Activated CD4-positive, alpha-beta T cell treated with anti-CD3 and anti-CD28 coated beads for 36 hours (primary cell): ENCODE measurements at regions of chr17 and their contacts with region 1.

Region 1: DNA sequence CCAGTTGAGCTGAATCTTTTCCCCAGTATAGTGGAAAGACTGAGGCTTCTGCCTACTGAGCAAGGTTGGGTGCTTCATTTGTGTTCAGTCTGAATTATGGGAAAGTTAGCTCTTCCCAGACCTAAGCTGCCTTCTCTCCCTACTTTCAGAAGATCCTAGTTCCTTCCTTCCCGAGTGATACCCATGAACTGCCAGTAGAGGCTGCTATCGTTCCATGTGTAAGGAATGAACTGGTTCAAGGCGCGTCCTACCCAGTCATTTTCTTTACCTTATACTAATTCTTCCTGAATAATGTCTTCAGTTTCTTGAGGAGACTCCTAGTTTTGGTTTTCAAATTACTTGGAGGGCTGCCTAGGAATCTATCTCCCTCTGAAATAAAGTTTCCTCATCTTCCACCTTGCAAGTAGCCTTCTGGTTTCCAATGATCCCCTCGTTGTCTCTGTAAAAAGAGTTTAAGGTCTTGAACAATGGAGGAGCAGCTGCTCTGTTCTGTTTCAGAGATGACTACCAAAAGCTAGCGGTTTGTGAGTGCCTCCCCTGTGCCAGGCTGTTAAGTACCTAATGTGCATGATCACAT is 934 bp upstream of the AOC2 start:
- DNase-seq: peak; percentile 37
- ATAC-seq: no peak
- H3K4me3 Mint-ChIP-seq: no peak overlapping the region
- H3K27ac Mint-ChIP-seq: no peak overlapping the region
- H3K4me1 Mint-ChIP-seq: peaks cover 19% of the 10 kb centered on the region
- H3K27me3 Mint-ChIP-seq: no peaks in the 10 kb centered on the region

Region 2: DNA sequence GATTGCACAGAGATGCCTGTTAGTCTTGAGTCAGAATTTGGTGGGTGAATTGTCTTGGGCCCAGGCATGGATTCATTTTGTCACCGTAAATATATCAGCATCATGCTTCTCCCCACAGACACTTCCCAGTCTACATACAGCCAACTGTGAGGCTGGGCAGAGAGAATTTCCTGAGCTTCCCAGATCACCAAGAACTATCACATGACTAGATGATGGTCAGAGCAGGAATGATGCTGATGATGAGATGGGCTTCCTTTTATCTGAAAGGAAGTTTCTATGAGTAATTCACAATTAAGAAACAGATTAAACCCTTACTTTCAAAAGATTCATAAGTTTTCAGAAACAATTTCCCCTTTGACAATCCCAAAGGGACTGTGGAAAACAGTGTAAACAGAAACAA is 1588.6 kb before region 1 on chr17:
- CTCF ChIA-PET with region 1: no interaction called
- POLR2A ChIA-PET with region 1: no interaction called
- intact Hi-C with region 1: no loop called
- DNase-seq: no peak
- ATAC-seq: no peak
- H3K4me3 Mint-ChIP-seq: no peak overlapping the region
- H3K27ac Mint-ChIP-seq: no peak overlapping the region
- H3K4me1 Mint-ChIP-seq: no peaks in the 10 kb centered on the region
- H3K27me3 Mint-ChIP-seq: peaks cover 4% of the 10 kb centered on the region

Region 3: GRCh38 chr17:42832974-42833766 is 10.3 kb before region 1 on chr17 and contains the start of gene PSME3:
- CTCF ChIA-PET with region 1: interaction called, 10 read pairs
- POLR2A ChIA-PET with region 1: interaction called, 13 read pairs
- intact Hi-C with region 1: loop called in 1 of 2 experiments (anchors 1 kb)
- DNase-seq: peak; percentile 94
- ATAC-seq: peak; percentile 90
- H3K4me3 Mint-ChIP-seq: peak within 1 kb of the TSS; percentile 96
- H3K27ac Mint-ChIP-seq: peak within 1 kb of the TSS; percentile 98
- H3K4me1 Mint-ChIP-seq: peaks cover 18% of the 10 kb centered on the region
- H3K27me3 Mint-ChIP-seq: no peaks in the 10 kb centered on the region
- total RNA-seq, gene PSME3: 116 to 118 TPM

Region 4: GRCh38 chr17:42928714-42929496 is 85.5 kb after region 1 on chr17:
- CTCF ChIA-PET with region 1: interaction called, 6 read pairs
- POLR2A ChIA-PET with region 1: no interaction called
- intact Hi-C with region 1: loop called (anchors 1 to 2 kb)
- DNase-seq: peak; percentile 60
- ATAC-seq: peak; percentile 94
- H3K4me3 Mint-ChIP-seq: peak overlapping the region; percentile 0
- H3K27ac Mint-ChIP-seq: peak overlapping the region; percentile 48
- H3K4me1 Mint-ChIP-seq: peaks cover 14% of the 10 kb centered on the region
- H3K27me3 Mint-ChIP-seq: peaks cover 4% of the 10 kb centered on the region

Region 5: DNA sequence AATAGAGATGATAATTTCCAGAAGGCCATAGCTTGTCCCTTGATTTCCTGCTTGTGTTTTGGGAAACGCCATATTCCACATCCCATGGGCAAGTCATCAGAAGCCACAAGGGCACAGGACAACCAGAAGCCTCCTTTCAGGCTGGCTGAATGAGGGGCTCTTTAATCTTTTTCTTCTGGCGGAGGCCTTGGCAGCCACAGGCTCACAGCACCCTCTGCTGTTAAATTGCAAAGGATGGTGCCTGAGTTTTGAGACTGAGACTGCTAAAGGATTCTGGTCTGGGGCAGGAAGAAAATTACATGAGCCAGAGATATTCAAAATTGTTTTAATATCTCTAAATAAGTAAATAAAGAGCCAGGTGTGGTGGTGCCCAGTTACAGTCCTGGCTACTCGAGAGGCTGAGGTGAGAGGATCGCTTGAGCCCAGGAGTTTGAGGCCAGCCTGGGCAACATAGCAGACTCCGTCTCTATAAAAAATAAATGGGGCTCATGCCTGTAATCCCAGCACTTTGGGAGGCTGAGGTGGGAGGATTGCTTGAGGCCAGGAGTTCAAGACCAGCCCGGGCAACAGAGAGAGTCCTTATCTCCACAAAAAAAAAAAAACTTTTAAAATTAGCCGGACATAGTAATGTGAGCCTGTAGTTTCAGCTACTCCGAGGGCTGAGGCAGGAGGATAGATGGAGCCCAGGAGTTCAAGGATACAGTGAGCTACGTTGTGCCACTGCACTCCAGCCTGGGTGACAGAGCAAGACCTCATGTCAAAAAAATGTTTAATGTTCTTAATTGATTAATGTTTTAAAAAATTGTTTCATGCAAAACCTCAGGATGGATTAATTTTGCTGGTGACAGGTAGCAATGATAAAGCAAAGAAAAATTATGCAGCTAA is 94.5 kb after region 1 on chr17:
- CTCF ChIA-PET with region 1: interaction called, 7 read pairs
- POLR2A ChIA-PET with region 1: interaction called, 7 read pairs
- intact Hi-C with region 1: loop called in 1 of 2 experiments (anchors 1 kb)
- DNase-seq: peak; percentile 50
- ATAC-seq: no peak
- H3K4me3 Mint-ChIP-seq: no peak overlapping the region
- H3K27ac Mint-ChIP-seq: no peak overlapping the region
- H3K4me1 Mint-ChIP-seq: no peaks in the 10 kb centered on the region
- H3K27me3 Mint-ChIP-seq: peaks cover 4% of the 10 kb centered on the region